Aorta (tissue), 5 donors: ENCODE measurements at regions of chr1 and their contacts with region 1.

Region 1: DNA sequence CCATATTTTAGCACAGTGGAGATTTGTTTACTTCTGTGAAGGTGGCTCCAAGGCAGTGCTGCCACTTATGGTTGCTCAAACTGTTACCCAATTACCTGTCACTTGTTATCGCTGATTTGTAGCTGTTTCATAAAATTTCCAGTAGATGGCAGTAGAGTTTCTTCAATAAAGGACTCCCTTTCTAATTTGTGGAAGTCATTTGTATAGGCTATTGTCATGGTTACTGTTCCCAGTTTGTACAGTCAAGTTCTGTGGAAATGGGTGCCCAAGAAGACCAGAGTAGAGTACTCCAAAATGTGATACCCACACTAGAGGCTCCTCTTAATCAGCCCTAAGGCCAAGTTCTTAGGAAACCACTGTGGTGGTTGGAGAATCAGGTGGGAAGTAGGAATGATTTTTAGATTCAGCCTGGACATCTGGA is 186.1 kb downstream of the CLEC20A start:
- DNase-seq: no peak
- ATAC-seq: peak; percentile 87
- H3K4me3 ChIP-seq: no peak overlapping the region
- H3K27ac ChIP-seq: no peak overlapping the region
- H3K4me1 ChIP-seq: peaks cover 0 to 2% of the 10 kb centered on the region in 2 donors
- H3K27me3 ChIP-seq: no peaks in the 10 kb centered on the region

Region 2: DNA sequence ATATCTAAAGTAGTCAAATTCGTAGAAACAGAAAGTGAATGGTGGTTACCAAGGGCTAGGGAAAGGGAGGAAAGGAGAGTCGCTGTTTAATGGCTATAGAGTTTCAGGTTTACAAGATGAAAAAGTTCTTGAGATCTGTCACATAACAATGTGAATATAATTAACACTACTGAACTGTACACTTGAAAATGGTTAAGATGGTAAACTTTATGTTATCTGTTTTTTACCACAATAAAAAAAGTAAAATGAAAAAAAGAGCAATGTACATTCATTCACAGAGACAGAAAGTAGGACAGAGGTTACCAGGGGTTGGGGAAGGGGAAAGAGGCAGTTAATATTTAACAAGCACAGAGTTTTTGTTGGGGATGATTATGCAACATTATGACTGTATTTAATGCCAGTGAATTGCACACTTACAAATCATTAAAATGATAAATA is 287.5 kb before region 1 on chr1:
- intact Hi-C with region 1: no loop called
- DNase-seq: no peak
- ATAC-seq: no peak
- H3K4me3 ChIP-seq: no peak overlapping the region
- H3K27ac ChIP-seq: no peak overlapping the region
- H3K4me1 ChIP-seq: peaks cover 0 to 3% of the 10 kb centered on the region in 2 donors
- H3K27me3 ChIP-seq: no peaks in the 10 kb centered on the region

Region 3: DNA sequence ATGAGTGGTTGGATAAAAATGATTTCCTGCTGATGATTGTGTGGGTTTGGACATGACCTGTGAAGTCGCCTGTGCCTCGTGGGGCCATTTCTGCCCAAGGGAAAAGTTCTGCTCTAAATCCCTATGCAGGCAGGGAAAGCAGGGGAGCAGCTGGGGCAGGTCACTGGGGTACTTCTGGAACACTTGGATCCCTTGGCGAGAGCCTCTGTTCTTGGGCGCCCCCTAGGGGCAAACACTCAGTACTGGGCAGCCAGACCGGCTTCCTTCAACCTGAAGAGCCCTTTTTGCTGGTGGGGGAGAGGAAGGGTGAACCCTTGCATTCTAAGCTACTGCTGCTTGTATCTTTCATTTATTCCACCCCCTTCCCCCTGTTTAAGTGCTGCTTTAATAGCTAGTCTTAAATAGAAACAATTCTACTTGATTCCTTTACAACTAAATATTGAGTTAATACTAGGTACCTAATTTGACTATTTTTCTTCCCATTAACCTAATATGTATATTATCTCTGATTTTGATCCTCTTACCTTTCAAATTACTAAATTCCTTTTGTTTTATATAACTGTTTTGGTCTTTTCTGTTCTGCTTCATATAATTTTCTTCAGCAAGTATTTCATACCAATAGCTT is 191.1 kb after region 1 on chr1:
- intact Hi-C with region 1: loop called (anchors 5 kb)
- DNase-seq: peak; percentile 75 to 90
- ATAC-seq: peak; percentile 76
- H3K4me3 ChIP-seq: no peak overlapping the region
- H3K27ac ChIP-seq: no peak overlapping the region
- H3K4me1 ChIP-seq: no peaks in the 10 kb centered on the region
- H3K27me3 ChIP-seq: no peaks in the 10 kb centered on the region